Endothelial cell of umbilical vein (primary cell): ENCODE measurements at regions of chr4 and their contacts with region 1.

Region 1: GRCh38 chr4:142126890-142127497 is 490.6 kb downstream of the IL15 start:
- DNase-seq: peak; percentile 89
- H3K4me3 ChIP-seq: no peak overlapping the region
- H3K27ac ChIP-seq: no peak overlapping the region
- H3K4me1 ChIP-seq: peaks cover 40% of the 10 kb centered on the region
- H3K27me3 ChIP-seq: no peaks in the 10 kb centered on the region
- CTCF ChIP-seq: peak; percentile 55 to 61
- POLR2A ChIP-seq: no peak

Region 2: DNA sequence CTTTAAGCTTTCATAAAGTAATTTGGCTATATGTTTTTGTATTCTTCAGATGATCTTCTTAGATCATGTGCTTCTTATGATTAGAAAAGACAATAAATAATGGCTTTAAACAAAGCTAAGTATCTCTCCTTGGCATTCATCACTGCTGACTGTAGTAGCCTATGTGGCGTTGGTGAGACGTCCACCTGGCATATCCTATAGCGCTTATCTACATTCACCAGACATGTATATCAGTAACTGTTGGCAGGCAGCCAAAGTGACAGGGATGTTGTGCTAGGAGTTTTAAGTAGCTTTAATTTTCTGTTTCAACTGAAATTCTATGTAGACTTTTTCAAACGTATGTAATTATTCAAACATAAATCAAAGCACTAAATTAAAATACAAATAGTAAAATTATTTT is 214.2 kb before region 1 on chr4:
- CTCF ChIA-PET with region 1: interaction called, 4 read pairs
- POLR2A ChIA-PET with region 1: no interaction called
- dilution Hi-C with region 1: no loop called
- intact Hi-C with region 1: loop called (anchors 10 kb)
- DNase-seq: peak; percentile 97
- H3K4me3 ChIP-seq: no peak overlapping the region
- H3K27ac ChIP-seq: peak overlapping the region; percentile 44
- H3K4me1 ChIP-seq: peaks cover 11% of the 10 kb centered on the region
- H3K27me3 ChIP-seq: no peaks in the 10 kb centered on the region
- CTCF ChIP-seq: no peak
- POLR2A ChIP-seq: no peak

Region 3: DNA sequence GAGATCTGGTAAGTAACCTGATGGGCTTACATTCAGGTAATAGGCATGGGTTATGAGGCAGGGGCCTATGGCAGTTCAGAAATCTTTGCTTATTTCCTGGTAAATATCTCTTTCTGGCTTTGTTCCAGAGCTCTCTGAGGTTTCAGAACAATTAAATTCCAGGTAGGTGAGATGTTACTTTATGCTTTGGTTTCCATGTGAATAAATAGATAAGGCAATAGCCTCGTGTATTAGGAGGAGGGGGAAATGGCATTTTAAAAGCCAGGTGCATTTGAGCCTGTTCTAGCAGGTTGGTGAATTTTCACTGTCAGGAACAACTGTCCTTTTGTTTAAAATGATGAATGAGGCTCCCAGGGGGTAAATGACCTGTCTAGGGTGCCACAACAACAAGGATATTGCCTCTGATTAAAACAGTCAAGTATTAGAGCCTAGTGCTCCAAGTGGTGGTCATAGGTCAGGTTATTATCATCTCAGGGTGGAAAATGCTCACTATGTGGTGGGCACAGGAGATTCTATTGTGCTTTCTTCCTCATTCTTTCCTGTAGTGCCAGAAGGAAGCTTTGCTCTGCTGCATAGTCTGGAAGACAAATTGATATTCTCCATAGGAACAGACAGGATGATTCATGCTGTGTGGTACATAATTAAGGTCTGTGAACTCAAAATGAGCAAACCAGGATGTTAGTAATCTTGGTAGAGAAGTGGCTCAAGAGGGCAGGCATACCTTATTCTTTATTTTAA is 422.9 kb after region 1 on chr4:
- CTCF ChIA-PET with region 1: no interaction called
- POLR2A ChIA-PET with region 1: no interaction called
- dilution Hi-C with region 1: no loop called
- intact Hi-C with region 1: loop called (anchors 5 kb)
- DNase-seq: peak; percentile 88
- H3K4me3 ChIP-seq: no peak overlapping the region
- H3K27ac ChIP-seq: peak overlapping the region; percentile 78
- H3K4me1 ChIP-seq: peaks cover 12% of the 10 kb centered on the region
- H3K27me3 ChIP-seq: no peaks in the 10 kb centered on the region
- CTCF ChIP-seq: no peak
- POLR2A ChIP-seq: no peak

Region 4: GRCh38 chr4:142719854-142720541 is 593.0 kb after region 1 on chr4:
- CTCF ChIA-PET with region 1: interaction called, 27 read pairs
- POLR2A ChIA-PET with region 1: no interaction called
- dilution Hi-C with region 1: no loop called
- intact Hi-C with region 1: loop called (anchors 1 kb)
- DNase-seq: peak; percentile 39
- H3K4me3 ChIP-seq: no peak overlapping the region
- H3K27ac ChIP-seq: no peak overlapping the region
- H3K4me1 ChIP-seq: no peaks in the 10 kb centered on the region
- H3K27me3 ChIP-seq: no peaks in the 10 kb centered on the region
- CTCF ChIP-seq: peak in 1 of 2 donors; percentile 27
- POLR2A ChIP-seq: no peak

Region 5: GRCh38 chr4:143184217-143185116 is 1057.5 kb after region 1 on chr4 and contains the start of gene USP38:
- CTCF ChIA-PET with region 1: no interaction called
- POLR2A ChIA-PET with region 1: no interaction called
- dilution Hi-C with region 1: no loop called
- intact Hi-C with region 1: loop called (anchors 2 kb)
- DNase-seq: peak; percentile 90
- H3K4me3 ChIP-seq: peak within 1 kb of the TSS; percentile 64 to 84 (median 69)
- H3K27ac ChIP-seq: peak within 1 kb of the TSS; percentile 73
- H3K4me1 ChIP-seq: peaks cover 30% of the 10 kb centered on the region
- H3K27me3 ChIP-seq: no peaks in the 10 kb centered on the region
- CTCF ChIP-seq: no peak
- POLR2A ChIP-seq: peak; percentile 49
- total RNA-seq, gene USP38: 17.0 and 18.1 TPM in 2 replicates